ENCODE measurements at regions of chr12 and their contacts with region 1.

Region 1: GRCh38 chr12:11486623-11487444 is 91.5 kb upstream of the PRB2 start:
- DNase-seq: peak; percentile 71
- ATAC-seq: peak; percentile 84

Region 2: GRCh38 chr12:10235761-10236631 is 1250.8 kb before region 1 on chr12:
- intact Hi-C with region 1: no loop called
- DNase-seq: peak; percentile 52
- ATAC-seq: peak; percentile 87

Region 3: DNA sequence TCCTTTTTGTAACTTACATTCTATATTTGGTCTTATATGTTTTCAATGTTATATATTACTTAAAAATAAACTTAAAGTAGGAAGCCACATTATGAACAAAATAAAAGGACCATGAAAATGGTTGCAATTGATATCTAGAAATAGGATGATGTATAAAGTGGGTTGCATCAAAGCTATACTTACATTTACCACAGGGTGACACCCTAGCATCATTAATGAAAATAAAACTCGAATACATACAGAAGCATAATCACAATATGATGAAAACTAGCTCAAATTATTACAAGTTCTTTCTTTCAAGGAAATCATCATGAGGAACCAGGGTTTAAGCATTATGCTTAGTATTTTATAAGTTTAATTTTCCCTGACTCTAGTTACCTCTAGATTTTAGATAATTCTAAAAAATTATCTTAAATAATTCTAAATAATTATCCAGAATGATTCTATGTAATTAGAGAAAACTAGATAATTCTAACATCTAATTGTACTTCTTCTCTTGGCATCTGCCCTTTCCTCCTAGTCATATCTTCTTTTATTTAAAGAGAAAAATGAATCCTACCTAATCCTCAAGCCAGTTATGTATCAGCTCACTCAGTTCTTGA is 715.6 kb before region 1 on chr12:
- intact Hi-C with region 1: loop called (anchors 5 kb)
- DNase-seq: no peak
- ATAC-seq: peak; percentile 53

Region 4: DNA sequence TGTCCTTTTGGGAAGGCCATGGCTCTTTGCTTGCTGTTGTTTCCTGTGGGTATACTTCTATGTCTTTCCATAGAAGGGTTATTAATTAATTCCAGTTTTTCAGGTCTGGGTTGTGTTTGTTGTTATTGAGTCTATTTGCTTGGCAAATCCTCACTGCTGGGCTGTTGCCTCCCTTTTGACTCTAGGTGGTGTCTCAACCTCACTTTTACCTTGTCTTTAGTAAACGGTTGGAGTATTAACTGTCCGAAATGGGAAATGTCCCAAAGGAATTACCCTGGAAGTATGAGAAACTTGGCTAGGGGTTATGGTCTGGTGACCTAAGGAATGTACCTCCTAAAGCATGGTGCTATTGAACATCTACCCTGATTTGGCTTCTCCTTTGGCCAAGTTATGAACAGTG is 619.5 kb before region 1 on chr12:
- intact Hi-C with region 1: loop called (anchors 10 kb)
- DNase-seq: no peak
- ATAC-seq: no peak